Posterior vena cava (tissue), 2 donors: ENCODE measurements at regions of chr2 and their contacts with region 1.

Region 1: GRCh38 chr2:28880193-28880592 is 10.1 kb upstream of the TRMT61B start:
- DNase-seq: no peak

Region 2: DNA sequence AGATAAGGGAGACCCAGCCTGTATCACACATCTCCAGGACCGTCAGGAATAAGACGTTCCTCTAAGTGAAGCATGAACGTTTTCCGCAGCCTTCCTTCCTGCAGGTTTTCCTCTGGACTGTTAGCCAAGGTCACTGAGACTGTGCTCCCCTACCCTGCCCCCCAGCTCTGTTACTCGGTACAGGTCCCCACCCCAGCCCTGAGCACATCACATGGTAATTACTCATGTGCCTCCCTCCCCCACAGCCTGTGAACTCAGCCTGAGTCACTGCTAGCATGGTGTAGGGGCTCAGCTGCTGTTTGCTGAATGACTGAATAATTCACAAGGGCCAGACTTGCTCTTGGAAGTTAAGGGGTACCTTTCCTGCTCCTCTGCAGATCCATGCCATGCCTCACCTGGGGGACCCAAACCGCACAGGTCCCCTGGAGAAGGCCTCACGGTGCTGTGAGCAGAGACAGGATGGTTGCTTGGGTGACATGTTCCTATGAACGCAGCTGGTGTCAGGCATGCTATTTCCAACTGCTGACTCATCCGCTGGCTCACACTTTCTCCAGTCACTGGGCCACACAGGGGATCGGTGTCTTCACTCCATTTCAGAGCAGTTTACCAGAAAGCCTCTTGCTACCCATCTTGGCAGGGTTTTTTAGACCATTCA is 296.2 kb before region 1 on chr2:
- intact Hi-C with region 1: no loop called
- DNase-seq: peak; percentile 95

Region 3: DNA sequence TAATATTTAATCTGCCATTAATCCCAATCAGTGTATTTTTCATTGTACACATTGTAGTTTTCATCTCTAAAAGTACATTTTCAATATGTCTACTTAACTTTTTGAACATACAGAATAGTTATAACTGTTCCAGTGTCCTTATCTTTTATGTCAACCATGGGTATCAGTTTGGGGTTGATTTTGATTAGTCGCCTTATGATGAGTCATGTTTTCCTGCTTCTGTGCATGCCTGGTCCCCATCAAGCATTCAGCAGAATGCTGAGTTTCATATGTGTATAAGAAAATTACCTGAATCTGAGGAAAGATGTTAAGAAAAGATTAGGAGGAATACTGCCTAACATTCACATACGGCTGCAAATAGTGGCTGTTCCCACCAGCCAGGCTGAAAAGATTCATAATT is 51.8 kb before region 1 on chr2:
- intact Hi-C with region 1: loop called in 1 of 2 experiments (anchors 2 kb)
- DNase-seq: no peak